ENCODE measurements at regions of chr3 and their contacts with region 1.

Region 1: GRCh38 chr3:81338676-81339555 is 422.5 kb downstream of the GBE1 start:
- DNase-seq: peak; percentile 12
- ATAC-seq: peak; percentile 86
- H3K4me3 ChIP-seq: no peak overlapping the region
- H3K27ac ChIP-seq: no peak overlapping the region
- H3K4me1 ChIP-seq: no peaks in the 10 kb centered on the region
- H3K27me3 ChIP-seq: no peaks in the 10 kb centered on the region
- CTCF ChIP-seq: peak; percentile 60
- EP300 ChIP-seq: no peak
- POLR2A ChIP-seq: no peak
- RAD21 ChIP-seq: 0 out of 2 replicates have a peak, but pooled peaks have one; percentile 22

Region 2: DNA sequence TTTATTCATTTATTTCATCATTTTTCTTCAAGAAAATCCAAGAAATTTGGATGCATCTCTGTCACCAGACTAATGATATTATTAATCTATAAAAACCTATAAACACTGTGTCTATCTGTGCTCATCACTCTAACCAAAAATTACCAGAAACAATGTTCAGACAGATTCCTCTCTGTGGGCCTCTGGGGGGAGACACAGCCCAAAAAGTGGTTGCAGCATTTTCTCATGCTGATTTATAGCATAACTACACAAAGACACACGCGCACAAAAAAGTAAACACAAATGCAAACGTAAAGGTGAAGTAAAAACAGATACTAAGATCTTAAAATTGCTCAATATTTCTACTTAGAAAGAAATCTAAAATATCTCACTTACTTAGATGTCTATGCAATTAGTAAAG is 553.4 kb before region 1 on chr3:
- CTCF ChIA-PET with region 1: no interaction called
- POLR2A ChIA-PET with region 1: no interaction called
- in situ Hi-C with region 1: no loop called
- intact Hi-C with region 1: loop called (anchors 10 kb)
- DNase-seq: peak; percentile 6
- ATAC-seq: peak; percentile 47; the same call in 2 of the 3 replicates
- H3K4me3 ChIP-seq: no peak overlapping the region
- H3K27ac ChIP-seq: no peak overlapping the region
- H3K4me1 ChIP-seq: no peaks in the 10 kb centered on the region
- H3K27me3 ChIP-seq: no peaks in the 10 kb centered on the region
- CTCF ChIP-seq: peak; percentile 48
- EP300 ChIP-seq: no peak
- POLR2A ChIP-seq: no peak
- RAD21 ChIP-seq: no peak

Region 3: DNA sequence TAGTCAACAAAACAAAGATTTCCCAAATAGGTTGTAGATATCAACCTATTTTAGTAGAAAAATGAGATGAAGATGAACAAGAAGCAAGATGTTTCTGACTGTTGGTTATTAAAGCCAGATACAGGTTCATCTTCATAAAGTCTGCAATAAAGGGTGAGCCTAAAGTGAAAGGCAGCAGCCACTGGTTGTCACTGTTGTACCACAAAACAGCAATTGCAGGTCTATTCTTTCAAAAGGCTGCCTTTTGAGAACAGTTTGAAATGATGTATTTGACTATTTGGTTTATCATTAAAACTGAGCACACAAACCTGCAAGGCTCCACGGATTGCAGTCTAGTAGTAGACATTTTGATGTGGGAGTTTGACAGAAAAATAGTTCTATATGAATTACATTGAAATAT is 120.9 kb before region 1 on chr3:
- CTCF ChIA-PET with region 1: interaction called, 23 read pairs
- POLR2A ChIA-PET with region 1: no interaction called
- in situ Hi-C with region 1: loop called (anchors 10 kb)
- intact Hi-C with region 1: loop called (anchors 1 kb)
- DNase-seq: peak; percentile 23
- ATAC-seq: peak; percentile 82
- H3K4me3 ChIP-seq: no peak overlapping the region
- H3K27ac ChIP-seq: no peak overlapping the region
- H3K4me1 ChIP-seq: no peaks in the 10 kb centered on the region
- H3K27me3 ChIP-seq: no peaks in the 10 kb centered on the region; a peak in 1 of 5 replicates
- CTCF ChIP-seq: peak; percentile 80
- EP300 ChIP-seq: no peak
- POLR2A ChIP-seq: no peak
- RAD21 ChIP-seq: peak; percentile 67

Region 4: DNA sequence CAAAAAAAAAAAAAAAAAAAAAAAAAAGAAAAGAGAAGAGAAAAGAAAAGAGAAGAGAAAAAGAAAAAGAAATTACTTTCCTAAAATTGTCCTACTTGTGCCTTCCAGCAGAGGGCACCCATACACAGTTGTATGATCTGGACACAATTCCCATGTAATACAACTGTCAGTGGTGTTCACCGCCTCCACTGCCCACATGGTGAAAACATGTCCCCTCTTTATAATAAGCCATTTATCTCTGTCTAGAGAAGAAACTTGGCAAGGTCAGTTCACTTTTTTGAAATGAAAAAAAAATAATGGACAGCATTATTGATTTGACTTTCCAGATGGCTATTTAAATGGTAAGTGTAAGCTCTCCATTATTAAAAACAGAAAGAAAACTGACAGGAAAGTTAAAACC is 36.9 kb before region 1 on chr3:
- CTCF ChIA-PET with region 1: interaction called, 5 read pairs
- POLR2A ChIA-PET with region 1: interaction called, 3 read pairs
- in situ Hi-C with region 1: no loop called
- intact Hi-C with region 1: loop called (anchors 1 kb)
- DNase-seq: peak; percentile 48
- ATAC-seq: peak; percentile 59
- H3K4me3 ChIP-seq: no peak overlapping the region
- H3K27ac ChIP-seq: no peak overlapping the region
- H3K4me1 ChIP-seq: peaks cover 28% of the 10 kb centered on the region
- H3K27me3 ChIP-seq: peaks cover 0 to 9% of the 10 kb centered on the region in 2 experiments; a peak in 1 of 5 replicates
- CTCF ChIP-seq: peak; percentile 70
- EP300 ChIP-seq: no peak
- POLR2A ChIP-seq: no peak
- RAD21 ChIP-seq: 0 out of 2 replicates have a peak, but pooled peaks have one; percentile 26

Measured in HepG2 (cell line).